ENCODE measurements at regions of chrX and their contacts with region 1.

Region 1: GRCh38 chrX:69096963-69097362 is 68.3 kb downstream of the PJA1 start:
- DNase-seq: no peak
- H3K4me3 ChIP-seq: no peak overlapping the region
- H3K27ac ChIP-seq: no peak overlapping the region
- H3K4me1 ChIP-seq: no peaks in the 10 kb centered on the region
- H3K27me3 ChIP-seq: peaks cover 0 to 47% of the 10 kb centered on the region in 2 donors
- CTCF ChIP-seq: no peak
- POLR2A ChIP-seq: no peak

Region 2: DNA sequence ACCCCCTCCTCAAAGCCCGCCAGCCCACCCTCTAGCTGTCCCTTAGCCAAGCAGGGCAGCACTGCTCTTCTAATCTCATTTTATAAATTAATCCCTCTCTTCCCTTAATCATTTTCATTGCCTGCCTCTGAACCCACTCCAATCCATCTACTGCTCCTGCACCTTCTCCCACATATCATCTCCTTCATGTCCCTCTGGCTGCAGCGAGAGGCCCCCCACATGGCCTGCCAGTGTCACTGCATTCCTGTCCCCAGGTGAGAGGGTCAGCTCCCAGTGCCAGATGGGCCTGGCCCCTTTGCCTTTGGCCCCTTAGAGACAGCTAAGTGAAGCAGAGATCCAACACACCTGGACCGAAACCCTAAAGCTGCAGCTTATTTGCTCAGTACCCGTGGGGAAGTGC is 11.1 kb before region 1 on chrX:
- intact Hi-C with region 1: loop called (anchors 1 kb)
- DNase-seq: no peak
- H3K4me3 ChIP-seq: no peak overlapping the region
- H3K27ac ChIP-seq: no peak overlapping the region
- H3K4me1 ChIP-seq: no peaks in the 10 kb centered on the region
- H3K27me3 ChIP-seq: peaks cover 0 to 85% of the 10 kb centered on the region in 2 donors
- CTCF ChIP-seq: no peak
- POLR2A ChIP-seq: no peak

Measured in breast epithelium (tissue), 4 donors.